Activated CD8-positive, alpha-beta T cell treated with anti-CD3 and anti-CD28 coated beads for 36 hours (primary cell): ENCODE measurements at regions of chr19 and their contacts with region 1.

Region 1: GRCh38 chr19:35269421-35270117 is 807 bp downstream of the USF2 start:
- DNase-seq: peak; percentile 84
- ATAC-seq: peak; percentile 63
- H3K4me3 Mint-ChIP-seq: peak overlapping the region; percentile 63
- H3K27ac Mint-ChIP-seq: peak overlapping the region; percentile 38
- H3K4me1 Mint-ChIP-seq: peaks cover 28% of the 10 kb centered on the region
- H3K27me3 Mint-ChIP-seq: no peaks in the 10 kb centered on the region
- CTCF ChIP-seq: peak; percentile 96

Region 2: DNA sequence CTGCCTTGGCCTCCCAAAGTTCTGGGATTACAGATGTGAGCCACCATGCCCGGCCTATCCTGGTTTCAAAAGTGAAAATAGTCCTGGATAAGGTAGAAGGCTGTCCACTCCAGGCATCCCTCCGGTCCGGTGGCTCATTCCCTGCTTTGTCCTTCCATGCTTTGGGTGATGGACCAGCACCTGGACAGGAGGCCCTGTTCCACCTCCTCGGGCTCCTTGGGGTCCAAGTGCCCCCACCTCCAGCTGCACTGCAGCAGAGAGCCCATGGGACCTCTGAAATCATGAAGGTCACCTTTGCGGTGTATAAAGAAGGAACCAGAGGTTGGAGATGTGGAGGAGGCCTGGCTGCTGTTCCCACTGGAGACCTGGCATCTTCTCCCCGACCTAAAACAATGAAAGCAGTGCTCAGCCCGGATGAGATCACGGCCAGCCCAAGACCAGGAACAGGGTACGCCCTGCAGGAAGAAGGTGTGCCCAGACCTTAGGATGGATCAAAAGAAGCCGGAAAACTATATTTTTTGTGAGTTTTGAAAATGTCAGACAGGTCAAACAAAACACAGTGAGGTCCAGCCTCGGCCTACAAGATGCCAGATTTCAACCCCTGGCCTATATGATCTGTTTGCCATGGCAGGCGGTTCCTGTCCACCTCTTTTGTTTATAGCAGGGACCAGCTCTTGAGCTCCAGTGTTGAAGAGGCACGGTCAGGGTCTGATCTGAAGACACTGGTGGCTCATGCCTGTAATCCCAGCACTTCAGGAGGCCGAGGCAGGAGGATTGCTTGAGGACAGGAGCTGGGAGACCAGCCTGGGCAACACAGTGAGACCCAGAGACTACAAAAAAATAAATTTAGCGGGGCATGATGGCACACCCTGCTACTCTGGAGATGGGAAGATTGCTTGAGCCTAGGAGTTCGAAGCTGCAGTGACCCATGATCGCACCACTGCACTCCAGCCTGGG is 14.9 kb before region 1 on chr19:
- CTCF ChIA-PET with region 1: interaction called, 3 read pairs
- POLR2A ChIA-PET with region 1: interaction called, 11 read pairs
- intact Hi-C with region 1: no loop called
- DNase-seq: no peak
- ATAC-seq: no peak
- H3K4me3 Mint-ChIP-seq: no peak overlapping the region
- H3K27ac Mint-ChIP-seq: no peak overlapping the region
- H3K4me1 Mint-ChIP-seq: peaks cover 36% of the 10 kb centered on the region
- H3K27me3 Mint-ChIP-seq: no peaks in the 10 kb centered on the region
- CTCF ChIP-seq: no peak

Region 3: GRCh38 chr19:35318650-35319448 is 49.3 kb after region 1 on chr19:
- CTCF ChIA-PET with region 1: no interaction called
- POLR2A ChIA-PET with region 1: no interaction called
- intact Hi-C with region 1: no loop called
- DNase-seq: peak; percentile 41
- ATAC-seq: peak; percentile 62
- H3K4me3 Mint-ChIP-seq: no peak overlapping the region
- H3K27ac Mint-ChIP-seq: no peak overlapping the region
- H3K4me1 Mint-ChIP-seq: peaks cover 10% of the 10 kb centered on the region
- H3K27me3 Mint-ChIP-seq: peaks cover 4% of the 10 kb centered on the region
- CTCF ChIP-seq: no peak